GM12878 (cell line): ENCODE measurements at regions of chr3 and their contacts with region 1.

Region 1: GRCh38 chr3:165895918-165896317 is 58.7 kb upstream of the BCHE start:
- DNase-seq: no peak
- ATAC-seq: peak; percentile 81
- H3K4me3 ChIP-seq: no peak overlapping the region
- H3K27ac ChIP-seq: no peak overlapping the region
- H3K4me1 ChIP-seq: no peaks in the 10 kb centered on the region
- H3K27me3 ChIP-seq: no peaks in the 10 kb centered on the region
- CTCF ChIP-seq: peak; percentile 30 to 45 (median 32); a peak in 4 of 6 replicates
- EP300 ChIP-seq: no peak
- POLR2A ChIP-seq: no peak
- RAD21 ChIP-seq: 0 out of 2 replicates have a peak, but pooled peaks have one; percentile 12

Region 2: GRCh38 chr3:165854696-165855095 is 41.2 kb before region 1 on chr3:
- CTCF ChIA-PET with region 1: interaction called, 11 read pairs
- POLR2A ChIA-PET with region 1: no interaction called
- RAD21 ChIA-PET with region 1: no interaction called
- SMC1A ChIA-PET with region 1: interaction called, 5 read pairs
- in situ Hi-C with region 1: no loop called
- intact Hi-C with region 1: no loop called
- DNase-seq: no peak
- ATAC-seq: peak; percentile 48
- H3K4me3 ChIP-seq: no peak overlapping the region
- H3K27ac ChIP-seq: no peak overlapping the region
- H3K4me1 ChIP-seq: no peaks in the 10 kb centered on the region
- H3K27me3 ChIP-seq: no peaks in the 10 kb centered on the region
- CTCF ChIP-seq: peak; percentile 35 to 50 (median 48); a peak in 4 of 6 replicates
- EP300 ChIP-seq: no peak
- POLR2A ChIP-seq: no peak
- RAD21 ChIP-seq: 0 out of 2 replicates have a peak, but pooled peaks have one; percentile 20

Region 3: GRCh38 chr3:165874663-165875489 is 21.0 kb before region 1 on chr3:
- CTCF ChIA-PET with region 1: interaction called, 11 read pairs
- POLR2A ChIA-PET with region 1: no interaction called
- RAD21 ChIA-PET with region 1: no interaction called
- SMC1A ChIA-PET with region 1: interaction called, 3 read pairs
- in situ Hi-C with region 1: no loop called
- intact Hi-C with region 1: no loop called
- DNase-seq: no peak
- ATAC-seq: peak; percentile 60
- H3K4me3 ChIP-seq: no peak overlapping the region
- H3K27ac ChIP-seq: no peak overlapping the region
- H3K4me1 ChIP-seq: no peaks in the 10 kb centered on the region
- H3K27me3 ChIP-seq: no peaks in the 10 kb centered on the region
- CTCF ChIP-seq: no peak
- EP300 ChIP-seq: no peak
- POLR2A ChIP-seq: no peak
- RAD21 ChIP-seq: no peak

Region 4: GRCh38 chr3:165883866-165884478 is 11.9 kb before region 1 on chr3:
- CTCF ChIA-PET with region 1: interaction called, 16 read pairs
- POLR2A ChIA-PET with region 1: no interaction called
- RAD21 ChIA-PET with region 1: no interaction called
- SMC1A ChIA-PET with region 1: interaction called, 6 read pairs
- in situ Hi-C with region 1: no loop called
- intact Hi-C with region 1: no loop called
- DNase-seq: no peak
- ATAC-seq: peak; percentile 69
- H3K4me3 ChIP-seq: no peak overlapping the region
- H3K27ac ChIP-seq: no peak overlapping the region
- H3K4me1 ChIP-seq: no peaks in the 10 kb centered on the region
- H3K27me3 ChIP-seq: no peaks in the 10 kb centered on the region
- CTCF ChIP-seq: no peak
- EP300 ChIP-seq: no peak
- POLR2A ChIP-seq: no peak
- RAD21 ChIP-seq: no peak